ENCODE measurements at regions of chr4 and their contacts with region 1.

Region 1: DNA sequence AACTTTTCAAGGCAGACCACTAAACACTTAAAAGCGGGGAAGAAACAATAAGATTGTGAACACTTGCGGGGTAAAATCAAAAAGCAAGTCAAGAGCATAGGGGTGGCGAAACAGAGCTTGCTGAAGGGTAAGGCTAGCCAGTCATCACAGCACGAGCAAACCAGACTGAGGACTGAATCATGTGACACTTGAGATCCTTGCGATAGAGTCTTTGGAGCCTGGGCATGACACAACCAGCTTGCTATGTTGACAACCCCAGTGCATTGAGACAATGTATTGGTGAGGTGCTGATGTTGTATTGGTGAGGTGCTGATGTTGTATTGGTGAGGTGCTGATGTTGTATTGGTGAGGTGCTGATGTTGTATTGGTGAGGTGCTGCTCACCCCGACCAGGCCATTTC is 72.3 kb downstream of the SLIT2 start:
- DNase-seq: no peak
- ATAC-seq: no peak
- H3K4me3 ChIP-seq: no peak overlapping the region
- H3K27ac ChIP-seq: no peak overlapping the region
- H3K4me1 ChIP-seq: no peaks in the 10 kb centered on the region
- H3K27me3 ChIP-seq: no peaks in the 10 kb centered on the region
- CTCF ChIP-seq: no peak

Region 2: DNA sequence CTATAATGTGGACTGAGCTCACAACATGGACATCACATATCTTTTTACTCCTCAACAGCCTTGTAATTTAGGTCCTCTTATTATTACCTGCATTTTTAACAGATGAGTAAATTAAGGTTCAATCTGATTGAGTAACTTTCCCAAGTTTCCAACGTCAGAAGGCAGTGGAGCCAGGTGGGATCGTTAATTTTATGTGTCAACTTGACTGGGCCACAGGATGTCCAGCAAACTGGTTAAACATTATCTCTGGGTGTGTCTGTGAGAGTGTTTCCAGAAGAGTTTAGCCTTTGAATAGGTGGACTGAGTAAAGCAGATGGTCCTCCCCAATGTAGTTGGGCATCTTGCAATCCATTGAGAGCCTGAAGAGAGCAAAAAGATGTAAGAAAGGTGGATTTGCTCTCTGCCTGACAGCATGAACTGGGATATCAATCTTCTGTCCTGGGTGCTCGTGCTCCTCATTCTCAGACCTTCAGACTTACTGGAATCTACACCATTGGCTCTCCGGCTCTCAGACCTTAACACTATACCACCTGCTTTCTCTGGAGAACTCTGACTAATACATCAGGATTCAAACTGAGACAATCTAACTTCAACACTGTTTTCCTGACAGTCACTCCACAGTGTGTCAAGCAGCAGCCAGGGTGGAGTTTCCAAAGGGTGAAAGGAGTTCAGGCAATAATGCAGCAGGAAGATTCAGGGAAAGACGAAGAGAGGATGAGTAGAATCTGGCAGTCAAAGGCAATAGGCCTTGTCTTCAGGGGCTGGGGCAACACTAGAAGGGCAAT is 131.0 kb before region 1 on chr4:
- intact Hi-C with region 1: no loop called
- DNase-seq: no peak
- ATAC-seq: peak in 3 of 8 donors; percentile 17 to 31 (median 29)
- H3K4me3 ChIP-seq: no peak overlapping the region
- H3K27ac ChIP-seq: peak overlapping the region in 9 of 10 donors; percentile 17 to 82 (median 64)
- H3K4me1 ChIP-seq: peaks cover 0 to 27% (median 3%) of the 10 kb centered on the region in 9 donors
- H3K27me3 ChIP-seq: no peaks in the 10 kb centered on the region
- CTCF ChIP-seq: no peak

Region 3: GRCh38 chr4:20983763-20984575 is 660.0 kb after region 1 on chr4:
- intact Hi-C with region 1: loop called in 1 of 10 experiments (anchors 5 kb)
- DNase-seq: no peak
- ATAC-seq: no peak
- H3K4me3 ChIP-seq: no peak overlapping the region
- H3K27ac ChIP-seq: no peak overlapping the region
- H3K4me1 ChIP-seq: no peaks in the 10 kb centered on the region
- H3K27me3 ChIP-seq: peaks cover 0 to 23% (median 14%) of the 10 kb centered on the region in 7 donors
- CTCF ChIP-seq: no peak